PC-9 (cell line): ENCODE measurements at regions of chr11 and their contacts with region 1.

Region 1: DNA sequence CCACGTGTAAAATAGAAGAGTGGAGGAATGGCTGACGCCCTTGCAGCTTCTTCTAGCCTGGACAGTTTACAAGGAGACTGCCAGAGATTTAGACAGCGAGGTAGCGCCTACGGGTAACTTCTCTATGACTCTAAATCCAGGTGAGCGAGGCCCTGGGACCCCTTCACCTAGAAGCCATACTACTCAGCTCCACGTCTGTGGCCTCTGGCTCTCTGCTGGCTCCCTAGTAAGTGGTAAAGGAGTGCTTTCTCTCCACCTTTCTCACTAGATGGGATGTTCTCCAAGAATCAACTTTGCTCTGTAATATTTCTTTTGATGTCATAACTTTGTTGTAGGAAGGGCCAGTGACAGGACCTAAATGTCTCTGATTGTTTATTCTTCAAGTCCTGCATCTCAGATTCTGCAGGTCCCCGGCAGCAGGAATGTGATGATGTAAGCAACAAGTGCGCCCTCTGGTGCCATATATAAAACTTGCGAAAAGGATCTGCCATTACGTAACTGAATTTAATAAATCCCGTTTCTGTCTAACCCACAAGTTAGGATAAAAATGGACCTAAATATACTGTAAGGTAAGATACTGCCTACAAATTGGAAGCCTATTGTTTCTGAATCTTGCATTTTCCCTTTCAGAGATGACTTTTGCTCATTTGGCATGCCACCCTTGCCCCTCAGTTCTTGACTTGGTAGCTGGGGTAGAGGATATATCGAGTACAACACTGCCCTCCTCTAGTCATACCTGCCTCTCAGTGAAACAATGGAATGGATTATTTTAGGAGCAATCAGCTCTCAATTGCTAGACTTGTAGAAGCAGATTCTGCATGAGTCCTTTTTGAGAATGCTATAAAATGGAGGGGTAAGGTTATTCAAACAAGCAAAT is 11.0 kb upstream of the PTPN5 start:
- DNase-seq: peak; percentile 51 to 67
- H3K4me3 ChIP-seq: no peak overlapping the region
- H3K27ac ChIP-seq: no peak overlapping the region
- H3K4me1 ChIP-seq: no peaks in the 10 kb centered on the region
- H3K27me3 ChIP-seq: peaks cover 21% of the 10 kb centered on the region; the same call in 1 of the 2 replicates
- CTCF ChIP-seq: peak; percentile 86

Region 2: DNA sequence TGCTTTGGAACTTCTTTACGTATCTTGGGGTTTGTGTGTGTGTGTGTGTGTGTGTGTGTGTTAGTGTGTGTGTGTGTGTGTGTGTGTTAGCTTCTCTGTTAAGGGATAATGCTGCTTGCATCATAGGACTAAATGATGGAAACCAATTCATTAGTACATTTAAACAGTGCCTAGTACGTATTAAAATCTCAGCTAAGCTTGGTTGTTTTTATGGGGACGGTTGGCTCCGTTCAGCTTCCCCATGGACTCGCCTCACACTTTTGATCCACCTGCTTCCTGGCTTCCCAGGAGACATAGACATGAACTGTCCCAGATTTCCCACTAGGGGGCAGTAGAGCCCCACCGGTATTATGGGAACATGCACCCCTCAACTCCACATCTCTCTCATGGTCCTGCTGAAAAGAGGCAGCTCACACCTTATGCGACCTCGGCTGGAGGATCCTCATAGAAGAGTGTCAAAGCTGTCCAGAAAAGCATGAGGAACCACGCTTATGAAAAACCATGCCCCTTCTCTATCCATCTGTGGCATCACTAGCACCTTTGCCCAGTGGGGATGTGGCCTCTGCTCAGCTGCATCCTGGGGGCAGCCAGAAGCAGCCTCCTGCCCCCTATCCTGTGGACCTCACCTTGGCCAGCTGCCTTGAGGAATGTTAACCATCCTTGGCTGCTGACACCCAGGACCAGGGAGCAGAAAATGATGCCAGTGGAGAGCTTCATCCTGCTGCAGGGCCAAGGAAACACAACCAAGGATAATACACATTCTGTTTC is 687.1 kb before region 1 on chr11:
- CTCF ChIA-PET with region 1: interaction called, 3 read pairs
- POLR2A ChIA-PET with region 1: no interaction called
- intact Hi-C with region 1: loop called (anchors 1 kb)
- DNase-seq: peak; percentile 63 to 64
- H3K4me3 ChIP-seq: no peak overlapping the region
- H3K27ac ChIP-seq: no peak overlapping the region
- H3K4me1 ChIP-seq: no peaks in the 10 kb centered on the region
- H3K27me3 ChIP-seq: peaks cover 30% of the 10 kb centered on the region
- CTCF ChIP-seq: peak; percentile 97

Region 3: DNA sequence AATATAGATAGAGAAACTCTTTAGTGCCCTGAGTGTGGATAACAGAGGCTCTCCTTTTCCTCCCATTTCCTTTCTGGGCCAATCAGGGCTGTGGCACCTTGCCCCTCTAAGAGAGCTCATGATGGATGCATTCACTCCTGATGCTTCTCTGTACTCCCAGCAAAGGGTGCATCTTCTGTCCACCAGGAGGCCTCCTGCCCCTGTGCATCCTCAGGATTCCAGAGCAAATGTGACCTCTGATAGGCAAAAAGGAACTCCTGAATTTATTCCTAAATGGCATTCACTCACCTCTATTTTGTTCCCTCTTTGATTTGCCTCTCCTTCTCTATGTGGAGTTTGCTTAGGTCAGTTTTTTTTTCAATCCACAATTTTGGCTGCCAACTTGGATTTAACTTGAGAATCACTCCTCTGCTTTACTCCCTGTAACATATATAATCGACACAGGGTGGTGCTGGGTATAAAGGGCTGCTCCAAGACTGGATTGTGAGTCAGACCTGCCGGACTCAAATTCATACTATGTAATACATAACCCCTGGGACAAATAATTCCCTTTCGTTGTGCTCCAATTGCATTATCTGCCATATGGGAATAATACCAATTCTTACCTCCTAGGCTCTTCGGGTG is 631.1 kb before region 1 on chr11:
- CTCF ChIA-PET with region 1: no interaction called
- POLR2A ChIA-PET with region 1: no interaction called
- intact Hi-C with region 1: loop called (anchors 1 kb)
- DNase-seq: peak in 1 of 2 experiments; percentile 45
- H3K4me3 ChIP-seq: no peak overlapping the region
- H3K27ac ChIP-seq: no peak overlapping the region
- H3K4me1 ChIP-seq: no peaks in the 10 kb centered on the region
- H3K27me3 ChIP-seq: peaks cover 15% of the 10 kb centered on the region
- CTCF ChIP-seq: peak; percentile 88

Region 4: DNA sequence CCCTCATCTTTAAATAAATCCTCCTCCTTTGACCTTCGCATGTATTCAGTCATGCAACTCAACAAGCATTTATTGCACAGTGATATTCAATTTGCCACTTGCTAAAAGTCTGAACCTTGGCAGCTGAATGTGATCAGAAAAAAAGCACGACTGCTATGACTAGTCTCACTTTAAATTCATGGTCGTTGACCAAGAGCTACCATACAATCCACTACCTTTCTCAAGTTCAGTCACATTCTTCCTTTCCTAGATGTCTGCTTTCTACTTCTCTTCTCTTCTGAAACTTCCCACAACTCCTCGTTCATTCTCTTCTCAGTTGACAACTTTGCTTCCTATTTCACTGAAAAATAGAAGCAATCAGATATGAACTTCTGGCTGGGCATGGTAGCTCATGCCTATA is 538.6 kb before region 1 on chr11:
- CTCF ChIA-PET with region 1: no interaction called
- POLR2A ChIA-PET with region 1: no interaction called
- intact Hi-C with region 1: no loop called
- DNase-seq: no peak
- H3K4me3 ChIP-seq: no peak overlapping the region
- H3K27ac ChIP-seq: no peak overlapping the region
- H3K4me1 ChIP-seq: peaks cover 14% of the 10 kb centered on the region
- H3K27me3 ChIP-seq: no peaks in the 10 kb centered on the region
- CTCF ChIP-seq: no peak

Region 5: GRCh38 chr11:18540207-18541009 is 262.2 kb before region 1 on chr11:
- CTCF ChIA-PET with region 1: no interaction called
- POLR2A ChIA-PET with region 1: no interaction called
- intact Hi-C with region 1: loop called (anchors 2 kb)
- DNase-seq: peak in 1 of 2 experiments; percentile 51
- H3K4me3 ChIP-seq: no peak overlapping the region
- H3K27ac ChIP-seq: no peak overlapping the region
- H3K4me1 ChIP-seq: no peaks in the 10 kb centered on the region
- H3K27me3 ChIP-seq: no peaks in the 10 kb centered on the region
- CTCF ChIP-seq: peak; percentile 78

Region 6: DNA sequence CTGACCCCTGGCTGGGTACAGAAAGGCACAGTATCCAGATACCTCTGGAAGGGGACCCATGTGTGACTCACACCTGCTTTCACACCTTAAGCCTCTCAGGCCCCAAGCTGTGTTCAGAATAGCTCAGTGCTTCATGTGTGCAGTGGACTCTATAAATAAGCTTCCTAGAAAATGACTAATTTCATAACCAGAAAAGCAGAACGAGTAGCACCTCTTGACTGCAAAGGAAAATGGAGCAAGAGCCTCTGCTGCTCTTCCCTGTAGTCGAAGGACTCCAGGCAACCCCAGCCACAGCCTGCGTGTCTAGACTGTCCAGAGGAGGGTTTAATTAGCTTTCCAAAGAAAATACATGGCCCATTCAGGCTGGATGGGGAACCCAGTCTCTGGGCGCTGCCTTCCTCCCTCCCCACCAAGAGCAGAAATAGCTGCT is 34.1 kb before region 1 on chr11:
- CTCF ChIA-PET with region 1: no interaction called
- POLR2A ChIA-PET with region 1: interaction called, 14 read pairs
- intact Hi-C with region 1: no loop called
- DNase-seq: no peak
- H3K4me3 ChIP-seq: no peak overlapping the region
- H3K27ac ChIP-seq: no peak overlapping the region
- H3K4me1 ChIP-seq: peaks cover 7% of the 10 kb centered on the region
- H3K27me3 ChIP-seq: peaks cover 21% of the 10 kb centered on the region
- CTCF ChIP-seq: no peak

Region 7: DNA sequence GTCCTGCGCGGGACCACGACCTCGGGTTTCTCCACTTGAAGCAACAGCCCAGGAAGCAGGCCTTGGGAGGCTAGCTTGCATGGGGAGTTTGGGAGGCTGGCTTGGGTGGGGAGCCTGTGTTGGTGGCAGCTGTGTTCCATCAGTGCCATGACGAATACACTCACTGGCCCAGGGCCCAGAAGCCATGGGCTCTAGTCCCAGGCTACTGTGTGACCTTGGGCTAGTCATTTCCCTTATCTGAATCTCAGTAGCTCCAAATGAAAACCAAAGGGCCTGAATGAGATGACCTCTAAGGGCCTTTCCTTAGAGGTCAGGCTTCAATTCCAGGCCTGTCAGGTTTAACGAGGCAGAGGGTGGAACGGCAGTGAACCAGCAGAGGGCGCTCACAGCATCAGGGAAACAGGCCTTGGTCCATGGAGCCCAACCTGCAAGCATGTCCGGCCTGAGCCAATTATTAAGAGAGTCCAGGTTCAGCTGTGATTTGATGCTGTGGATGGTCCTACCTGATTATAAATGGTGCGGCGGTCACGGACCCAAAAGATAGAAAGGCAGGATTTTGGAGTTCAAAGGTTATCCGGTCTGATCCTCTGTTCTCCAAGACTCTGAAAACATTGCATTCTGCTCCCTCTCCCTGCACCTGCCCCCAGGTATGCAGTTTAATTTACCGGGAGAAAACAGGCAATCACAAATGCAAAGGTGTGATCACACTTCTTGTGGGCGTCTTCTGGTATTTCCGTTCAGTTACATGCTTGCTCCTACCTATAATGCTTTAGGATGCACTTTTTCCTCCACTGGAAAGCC is 26.9 kb before region 1 on chr11:
- CTCF ChIA-PET with region 1: no interaction called
- POLR2A ChIA-PET with region 1: no interaction called
- intact Hi-C with region 1: loop called (anchors 1 kb)
- DNase-seq: peak; percentile 52 to 69
- H3K4me3 ChIP-seq: no peak overlapping the region
- H3K27ac ChIP-seq: no peak overlapping the region
- H3K4me1 ChIP-seq: no peaks in the 10 kb centered on the region
- H3K27me3 ChIP-seq: peaks cover 23% of the 10 kb centered on the region
- CTCF ChIP-seq: peak; percentile 92

Region 8: DNA sequence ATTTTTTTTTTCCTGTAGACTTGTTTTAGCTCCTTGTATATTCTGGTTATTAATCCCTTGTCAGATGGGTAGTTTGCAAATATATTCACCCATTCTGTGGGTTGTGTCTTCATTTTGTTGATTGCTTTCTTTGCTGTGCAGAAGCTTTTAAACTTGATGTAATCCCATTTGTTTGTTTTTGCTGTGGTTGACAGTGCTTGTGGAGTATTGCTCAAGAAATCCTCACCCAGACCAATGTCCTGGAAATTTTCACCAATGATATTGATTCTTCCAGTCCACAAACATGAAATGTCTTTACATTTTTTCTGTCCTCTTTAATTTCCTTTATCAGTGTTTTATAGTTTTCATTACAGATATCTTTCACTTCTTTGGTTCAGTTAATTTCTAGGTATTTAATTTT is 192.2 kb after region 1 on chr11:
- CTCF ChIA-PET with region 1: no interaction called
- POLR2A ChIA-PET with region 1: no interaction called
- intact Hi-C with region 1: no loop called
- DNase-seq: no peak
- H3K4me3 ChIP-seq: no peak overlapping the region
- H3K27ac ChIP-seq: no peak overlapping the region
- H3K4me1 ChIP-seq: no peaks in the 10 kb centered on the region
- H3K27me3 ChIP-seq: 0 out of 2 replicates have a peak, but pooled peaks cover 14% of the 10 kb centered on the region
- CTCF ChIP-seq: no peak